B cell (primary cell): ENCODE measurements at regions of chr11 and their contacts with region 1.

Region 1: DNA sequence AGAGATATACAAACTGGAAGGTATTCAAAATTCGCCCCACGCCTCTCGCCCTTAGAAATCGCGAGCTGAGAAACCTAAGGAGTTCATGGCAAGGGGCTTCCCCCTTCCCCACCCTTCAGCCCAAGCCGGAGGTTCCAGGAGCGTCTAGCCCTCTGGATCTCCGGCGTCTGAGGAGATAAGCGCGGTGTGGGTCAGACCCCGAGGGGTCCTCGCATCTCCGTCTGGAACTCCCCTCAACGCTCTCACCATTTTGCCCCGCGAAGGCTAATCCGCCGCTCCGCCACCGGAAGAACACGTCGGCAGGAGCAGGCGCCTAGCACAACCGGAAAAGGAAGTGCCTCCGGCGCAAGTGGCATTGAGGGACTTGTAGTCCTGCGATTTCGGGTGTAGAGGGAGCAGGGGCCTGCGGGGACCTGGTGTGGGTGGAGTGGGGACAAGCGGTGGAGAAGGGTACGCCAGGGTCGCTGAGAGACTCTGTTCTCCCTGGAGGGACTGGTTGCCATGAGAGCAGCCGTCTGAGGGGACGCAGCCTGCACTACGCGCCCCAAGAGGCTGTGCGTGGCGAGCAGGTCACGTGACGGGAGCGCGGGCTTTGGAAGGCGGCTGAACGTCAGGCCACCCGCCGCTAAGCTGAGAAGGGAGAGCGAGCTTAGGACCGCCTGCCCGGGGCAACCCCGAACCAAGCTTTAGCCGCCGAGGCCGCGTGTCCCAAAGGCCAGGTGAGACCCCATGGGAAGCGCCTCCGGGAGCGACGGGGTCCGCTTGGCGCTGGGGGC is at the starts of genes FEN1 and TMEM258:
- DNase-seq: peak; percentile 96
- ATAC-seq: peak; percentile 91
- H3K4me3 ChIP-seq: peak within 1 kb of the TSS; percentile 80 to 94 (median 88)
- H3K4me3 Mint-ChIP-seq: peak within 1 kb of the TSS; percentile 93
- H3K27ac ChIP-seq: peak within 1 kb of the TSS; percentile 92 to 96
- H3K27ac Mint-ChIP-seq: peak within 1 kb of the TSS; percentile 97
- H3K4me1 ChIP-seq: peaks cover 11 to 23% of the 10 kb centered on the region in 2 donors
- H3K4me1 Mint-ChIP-seq: peaks cover 34% of the 10 kb centered on the region
- H3K27me3 ChIP-seq: no peaks in the 10 kb centered on the region
- H3K27me3 Mint-ChIP-seq: no peaks in the 10 kb centered on the region
- CTCF ChIP-seq: no peak
- total RNA-seq, gene FEN1: 9.2 and 9.8 TPM in 2 replicates
- total RNA-seq, gene TMEM258: 64.6 and 65.8 TPM in 2 replicates

Region 2: DNA sequence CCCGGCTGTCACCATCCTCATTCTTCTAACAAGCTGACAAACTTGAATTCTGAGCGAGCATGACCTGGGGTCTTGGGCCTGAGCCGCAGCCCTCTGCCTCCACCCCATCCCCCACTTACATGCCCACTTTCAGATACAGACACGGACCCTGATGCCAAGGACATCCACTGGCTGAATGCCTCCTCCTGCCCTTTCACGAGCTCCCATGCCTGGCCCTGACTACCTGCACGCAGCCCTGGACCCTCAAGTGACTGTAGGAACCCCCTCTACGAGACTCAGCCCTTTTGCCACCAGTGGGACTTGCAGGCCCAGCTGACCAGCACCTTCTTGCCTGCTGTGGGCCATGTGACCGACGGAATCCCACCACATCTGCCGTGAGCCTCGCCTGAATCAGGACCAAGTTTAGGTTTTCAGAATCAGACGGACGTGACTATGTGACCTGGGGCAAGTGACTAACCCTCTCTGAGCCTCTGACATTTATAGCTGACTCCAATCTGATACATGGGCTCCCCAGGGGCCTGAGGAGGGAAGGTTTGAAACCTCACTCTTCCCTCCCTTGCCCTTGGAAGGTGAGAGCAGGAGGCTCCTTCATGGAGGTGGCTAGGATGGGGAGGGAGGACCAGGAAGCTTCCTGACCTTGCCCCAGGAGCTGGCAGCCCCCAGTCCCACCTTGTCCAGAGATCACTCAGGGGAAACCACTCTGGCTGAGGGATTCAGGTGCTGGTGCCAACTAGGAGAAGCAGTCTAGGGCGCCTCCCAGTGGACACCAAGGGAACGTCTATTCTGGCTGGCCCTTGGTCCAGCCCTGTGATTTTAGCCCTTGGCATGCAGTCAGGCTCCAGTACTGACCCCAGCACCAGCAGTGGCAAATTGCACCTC is 164.7 kb before region 1 on chr11:
- CTCF ChIA-PET with region 1: no interaction called
- POLR2A ChIA-PET with region 1: no interaction called
- intact Hi-C with region 1: no loop called
- DNase-seq: no peak
- ATAC-seq: no peak
- H3K4me3 ChIP-seq: no peak overlapping the region
- H3K4me3 Mint-ChIP-seq: no peak overlapping the region
- H3K27ac ChIP-seq: no peak overlapping the region
- H3K27ac Mint-ChIP-seq: no peak overlapping the region
- H3K4me1 ChIP-seq: no peaks in the 10 kb centered on the region
- H3K4me1 Mint-ChIP-seq: no peaks in the 10 kb centered on the region
- H3K27me3 ChIP-seq: no peaks in the 10 kb centered on the region
- H3K27me3 Mint-ChIP-seq: peaks cover 18% of the 10 kb centered on the region
- CTCF ChIP-seq: peak; percentile 47

Region 3: GRCh38 chr11:61645179-61645868 is 147.2 kb before region 1 on chr11:
- CTCF ChIA-PET with region 1: no interaction called
- POLR2A ChIA-PET with region 1: no interaction called
- intact Hi-C with region 1: no loop called
- DNase-seq: no peak
- ATAC-seq: no peak
- H3K4me3 ChIP-seq: no peak overlapping the region
- H3K4me3 Mint-ChIP-seq: no peak overlapping the region
- H3K27ac ChIP-seq: no peak overlapping the region
- H3K27ac Mint-ChIP-seq: no peak overlapping the region
- H3K4me1 ChIP-seq: peaks cover 0 to 3% of the 10 kb centered on the region in 2 donors
- H3K4me1 Mint-ChIP-seq: peaks cover 2% of the 10 kb centered on the region
- H3K27me3 ChIP-seq: no peaks in the 10 kb centered on the region
- H3K27me3 Mint-ChIP-seq: no peaks in the 10 kb centered on the region
- CTCF ChIP-seq: no peak

Region 4: DNA sequence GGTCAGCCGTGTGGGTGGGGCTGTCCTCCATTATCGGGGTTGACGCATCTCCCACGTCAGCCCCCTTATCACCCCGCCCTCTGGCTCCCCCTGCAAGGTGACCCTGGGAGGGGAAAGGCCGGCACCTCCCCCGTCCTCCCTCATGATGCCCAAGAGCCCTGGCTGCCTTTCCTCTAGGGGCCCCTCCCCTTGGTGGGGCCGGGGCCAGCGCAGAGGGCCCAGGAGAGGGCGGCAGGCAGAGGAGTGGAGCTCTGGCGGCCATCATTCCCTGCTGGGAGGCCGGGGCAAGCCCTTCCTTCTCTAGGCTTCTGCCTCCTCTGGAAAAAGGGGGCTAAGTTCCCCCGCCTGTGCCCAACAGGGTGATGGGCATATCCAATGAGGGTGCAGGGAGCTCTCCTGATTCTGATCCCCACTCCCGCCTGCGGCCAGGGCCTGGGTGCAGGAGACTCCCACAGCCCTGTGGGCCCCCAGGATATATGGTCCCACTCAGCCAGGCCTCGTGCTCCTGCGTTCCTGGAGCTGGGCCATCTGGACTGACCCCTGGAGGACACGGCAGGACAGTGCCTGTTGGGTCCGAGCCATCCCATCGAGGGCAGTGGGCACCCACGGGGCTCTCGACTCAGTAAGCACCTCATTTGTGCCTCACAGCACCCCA is 27.8 kb before region 1 on chr11:
- CTCF ChIA-PET with region 1: no interaction called
- POLR2A ChIA-PET with region 1: no interaction called
- intact Hi-C with region 1: no loop called
- DNase-seq: no peak
- ATAC-seq: no peak
- H3K4me3 ChIP-seq: no peak overlapping the region
- H3K4me3 Mint-ChIP-seq: no peak overlapping the region
- H3K27ac ChIP-seq: no peak overlapping the region
- H3K27ac Mint-ChIP-seq: no peak overlapping the region
- H3K4me1 ChIP-seq: no peaks in the 10 kb centered on the region
- H3K4me1 Mint-ChIP-seq: no peaks in the 10 kb centered on the region
- H3K27me3 ChIP-seq: no peaks in the 10 kb centered on the region
- H3K27me3 Mint-ChIP-seq: peaks cover 7% of the 10 kb centered on the region
- CTCF ChIP-seq: no peak

Region 5: DNA sequence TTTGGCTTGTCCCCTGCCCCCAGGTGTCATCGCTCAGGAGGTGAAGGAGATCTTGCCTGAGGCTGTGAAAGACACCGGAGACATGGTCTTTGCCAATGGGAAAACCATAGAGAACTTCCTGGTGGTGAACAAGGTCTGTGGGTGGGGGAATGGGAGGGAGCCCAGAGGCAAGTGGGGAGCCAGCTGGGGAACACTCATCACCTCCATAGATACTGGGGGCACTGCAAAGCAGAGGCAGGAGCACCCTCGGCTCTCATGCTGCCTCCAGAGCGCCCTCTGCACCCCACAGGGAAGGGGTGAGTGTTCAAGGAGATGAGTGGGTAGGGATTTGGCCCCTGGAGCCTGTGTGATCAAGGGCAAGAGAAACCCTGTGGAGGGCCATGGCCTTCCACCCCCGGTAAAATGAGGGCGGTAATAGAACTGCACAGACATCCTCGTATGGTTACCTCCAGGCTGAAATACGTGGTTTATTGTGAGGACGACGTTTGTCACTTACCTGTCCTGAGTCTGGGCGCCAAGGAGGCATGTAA is 14.1 kb before region 1 on chr11:
- CTCF ChIA-PET with region 1: interaction called, 11 read pairs
- POLR2A ChIA-PET with region 1: no interaction called
- intact Hi-C with region 1: no loop called
- DNase-seq: no peak
- ATAC-seq: no peak
- H3K4me3 ChIP-seq: no peak overlapping the region
- H3K4me3 Mint-ChIP-seq: peak overlapping the region; percentile 73
- H3K27ac ChIP-seq: no peak overlapping the region
- H3K27ac Mint-ChIP-seq: no peak overlapping the region
- H3K4me1 ChIP-seq: peaks cover 12 to 13% of the 10 kb centered on the region in 2 donors
- H3K4me1 Mint-ChIP-seq: peaks cover 17% of the 10 kb centered on the region
- H3K27me3 ChIP-seq: peaks cover 0 to 8% (median 0%) of the 10 kb centered on the region in 4 experiments
- H3K27me3 Mint-ChIP-seq: peaks cover 12% of the 10 kb centered on the region
- CTCF ChIP-seq: no peak

Region 6: DNA sequence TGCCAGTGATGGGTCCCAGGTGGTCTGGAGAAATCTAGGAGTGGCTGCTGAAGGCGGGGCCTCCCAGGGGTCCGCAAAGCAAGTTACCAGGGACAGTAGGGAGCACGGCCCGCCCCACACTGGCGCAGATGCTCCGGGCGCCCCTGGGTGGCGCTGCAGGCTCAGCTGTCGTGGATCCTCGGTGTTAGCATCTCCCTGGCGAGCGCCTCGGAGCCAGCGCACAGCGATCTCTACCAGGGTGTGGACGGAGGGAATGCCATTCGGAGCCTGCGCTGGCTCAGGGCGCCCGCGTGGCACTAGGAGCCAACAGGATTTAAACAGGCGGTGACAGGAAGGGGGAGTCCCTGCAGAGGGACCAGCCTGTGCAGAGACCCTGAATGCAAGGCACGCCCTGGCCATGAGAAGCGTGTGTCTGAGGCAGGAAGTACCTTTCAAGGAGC is 78.7 kb after region 1 on chr11:
- CTCF ChIA-PET with region 1: interaction called, 37 read pairs
- POLR2A ChIA-PET with region 1: no interaction called
- intact Hi-C with region 1: loop called (anchors 1 kb)
- DNase-seq: peak; percentile 88
- ATAC-seq: peak; percentile 97
- H3K4me3 ChIP-seq: peak overlapping the region in 4 of 5 experiments; percentile 13 to 38 (median 26)
- H3K4me3 Mint-ChIP-seq: peak overlapping the region; percentile 84
- H3K27ac ChIP-seq: no peak overlapping the region
- H3K27ac Mint-ChIP-seq: peak overlapping the region; percentile 83
- H3K4me1 ChIP-seq: peaks cover 9 to 12% of the 10 kb centered on the region in 2 donors
- H3K4me1 Mint-ChIP-seq: peaks cover 8% of the 10 kb centered on the region
- H3K27me3 ChIP-seq: peaks cover 0 to 4% (median 0%) of the 10 kb centered on the region in 4 experiments
- H3K27me3 Mint-ChIP-seq: no peaks in the 10 kb centered on the region
- CTCF ChIP-seq: peak; percentile 98

Region 7: GRCh38 chr11:61891331-61892084 is 99.0 kb after region 1 on chr11 and contains the start of gene FADS3:
- CTCF ChIA-PET with region 1: interaction called, 71 read pairs
- POLR2A ChIA-PET with region 1: interaction called, 5 read pairs
- intact Hi-C with region 1: loop called (anchors 1 kb)
- DNase-seq: peak; percentile 96
- ATAC-seq: peak; percentile 61
- H3K4me3 ChIP-seq: peak within 1 kb of the TSS; percentile 13 to 84 (median 72)
- H3K4me3 Mint-ChIP-seq: peak within 1 kb of the TSS; percentile 94
- H3K27ac ChIP-seq: peak within 1 kb of the TSS; percentile 79 to 91
- H3K27ac Mint-ChIP-seq: peak within 1 kb of the TSS; percentile 96
- H3K4me1 ChIP-seq: peaks cover 18 to 29% of the 10 kb centered on the region in 2 donors
- H3K4me1 Mint-ChIP-seq: peaks cover 38% of the 10 kb centered on the region
- H3K27me3 ChIP-seq: no peaks in the 10 kb centered on the region
- H3K27me3 Mint-ChIP-seq: no peaks in the 10 kb centered on the region
- CTCF ChIP-seq: peak; percentile 47
- total RNA-seq, gene FADS3: 224 and 225 TPM in 2 replicates

Region 8: GRCh38 chr11:61947486-61948210 is 155.2 kb after region 1 on chr11:
- CTCF ChIA-PET with region 1: interaction called, 95 read pairs
- POLR2A ChIA-PET with region 1: no interaction called
- intact Hi-C with region 1: loop called (anchors 1 kb)
- DNase-seq: peak; percentile 82
- ATAC-seq: peak; percentile 90
- H3K4me3 ChIP-seq: no peak overlapping the region
- H3K4me3 Mint-ChIP-seq: no peak overlapping the region
- H3K27ac ChIP-seq: no peak overlapping the region
- H3K27ac Mint-ChIP-seq: peak overlapping the region; percentile 3
- H3K4me1 ChIP-seq: peaks cover 7 to 9% of the 10 kb centered on the region in 2 donors
- H3K4me1 Mint-ChIP-seq: peaks cover 8% of the 10 kb centered on the region
- H3K27me3 ChIP-seq: no peaks in the 10 kb centered on the region
- H3K27me3 Mint-ChIP-seq: peaks cover 4% of the 10 kb centered on the region
- CTCF ChIP-seq: peak; percentile 90

Region 9: GRCh38 chr11:62088331-62088933 is 295.9 kb after region 1 on chr11:
- CTCF ChIA-PET with region 1: interaction called, 179 read pairs
- POLR2A ChIA-PET with region 1: no interaction called
- intact Hi-C with region 1: no loop called
- DNase-seq: no peak
- ATAC-seq: no peak
- H3K4me3 ChIP-seq: no peak overlapping the region
- H3K4me3 Mint-ChIP-seq: no peak overlapping the region
- H3K27ac ChIP-seq: no peak overlapping the region
- H3K27ac Mint-ChIP-seq: no peak overlapping the region
- H3K4me1 ChIP-seq: no peaks in the 10 kb centered on the region
- H3K4me1 Mint-ChIP-seq: no peaks in the 10 kb centered on the region
- H3K27me3 ChIP-seq: peaks cover 0 to 5% (median 1%) of the 10 kb centered on the region in 4 experiments
- H3K27me3 Mint-ChIP-seq: peaks cover 5% of the 10 kb centered on the region
- CTCF ChIP-seq: no peak

Region 10: GRCh38 chr11:62309991-62310390 is 517.5 kb after region 1 on chr11:
- CTCF ChIA-PET with region 1: interaction called, 10 read pairs
- POLR2A ChIA-PET with region 1: no interaction called
- intact Hi-C with region 1: no loop called
- DNase-seq: no peak
- ATAC-seq: no peak
- H3K4me3 ChIP-seq: no peak overlapping the region
- H3K4me3 Mint-ChIP-seq: no peak overlapping the region
- H3K27ac ChIP-seq: no peak overlapping the region
- H3K27ac Mint-ChIP-seq: no peak overlapping the region
- H3K4me1 ChIP-seq: peaks cover 8 to 12% of the 10 kb centered on the region in 2 donors
- H3K4me1 Mint-ChIP-seq: peaks cover 11% of the 10 kb centered on the region
- H3K27me3 ChIP-seq: peaks cover 0 to 39% (median 10%) of the 10 kb centered on the region in 4 experiments
- H3K27me3 Mint-ChIP-seq: peaks cover 45% of the 10 kb centered on the region
- CTCF ChIP-seq: no peak